Gastrocnemius medialis (tissue), 4 donors: ENCODE measurements at regions of chr5 and their contacts with region 1.

Region 1: DNA sequence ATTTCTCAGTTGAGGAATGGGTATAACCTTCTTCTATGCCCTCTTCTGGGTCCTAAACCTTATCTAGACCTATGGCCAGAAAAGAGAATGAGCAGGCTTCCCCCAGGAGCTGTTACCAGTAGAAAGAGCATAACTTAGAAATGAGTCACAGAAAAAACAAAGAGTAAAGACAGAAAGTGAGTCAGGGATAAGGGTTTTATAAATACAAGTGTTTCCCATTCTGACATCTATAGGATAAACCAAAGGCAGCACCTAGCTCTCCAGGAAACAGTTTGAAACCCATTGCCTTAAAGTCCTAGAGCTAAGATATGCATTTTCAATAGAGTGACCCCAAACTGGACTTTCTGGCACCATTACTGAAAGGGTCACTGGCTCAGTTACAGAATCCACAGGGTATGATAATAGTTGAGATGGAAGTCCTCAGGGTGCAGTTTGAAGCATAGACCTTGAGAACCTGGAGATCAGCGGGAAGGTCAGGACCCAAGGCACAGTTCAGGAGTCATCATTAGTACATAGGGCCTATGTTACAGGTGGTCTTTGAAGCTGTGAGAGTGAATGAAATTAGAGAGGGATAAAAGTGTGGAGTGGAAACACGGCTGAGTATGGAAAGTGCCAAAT is 42.7 kb upstream of the LIFR start:
- DNase-seq: no peak
- ATAC-seq: no peak
- H3K4me3 ChIP-seq: no peak overlapping the region
- H3K27ac ChIP-seq: peak overlapping the region in 3 of 4 donors; percentile 34 to 85 (median 82)
- H3K4me1 ChIP-seq: peaks cover 35 to 57% of the 10 kb centered on the region in 2 donors
- H3K27me3 ChIP-seq: no peaks in the 10 kb centered on the region
- CTCF ChIP-seq: no peak
- POLR2A ChIP-seq: no peak

Region 2: DNA sequence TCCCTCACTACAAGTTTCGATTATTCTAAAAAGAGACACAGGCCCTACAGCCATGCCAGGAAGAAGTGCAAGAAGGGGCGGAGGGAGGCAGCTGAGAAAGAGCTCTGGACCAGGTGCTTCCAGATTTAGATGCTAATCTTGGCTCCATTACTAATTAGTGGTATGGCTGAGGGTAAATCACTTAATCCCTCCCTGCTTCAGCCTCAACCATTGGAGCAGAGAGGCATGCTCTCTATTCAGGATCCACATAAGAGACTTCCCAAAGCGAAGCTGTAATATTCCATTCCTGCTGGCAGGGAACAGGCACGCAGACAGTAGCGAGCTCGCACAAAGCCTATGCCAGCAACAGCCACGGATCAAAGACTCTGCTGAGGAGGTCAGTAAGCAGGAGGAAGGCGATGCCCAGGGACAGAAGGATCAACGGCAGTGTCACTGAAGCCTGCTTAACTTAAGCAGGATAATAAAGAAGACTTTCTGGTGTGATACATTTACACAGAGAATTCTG is 66.9 kb before region 1 on chr5:
- in situ Hi-C with region 1: loop called in 1 of 4 experiments (anchors 10 kb)
- intact Hi-C with region 1: no loop called
- DNase-seq: no peak
- ATAC-seq: peak; percentile 28 to 56
- H3K4me3 ChIP-seq: peak overlapping the region in 1 of 4 donors; percentile 18
- H3K27ac ChIP-seq: peak overlapping the region; percentile 78 to 87 (median 85)
- H3K4me1 ChIP-seq: peaks cover 60 to 73% of the 10 kb centered on the region in 2 donors
- H3K27me3 ChIP-seq: no peaks in the 10 kb centered on the region
- CTCF ChIP-seq: no peak
- POLR2A ChIP-seq: no peak

Region 3: DNA sequence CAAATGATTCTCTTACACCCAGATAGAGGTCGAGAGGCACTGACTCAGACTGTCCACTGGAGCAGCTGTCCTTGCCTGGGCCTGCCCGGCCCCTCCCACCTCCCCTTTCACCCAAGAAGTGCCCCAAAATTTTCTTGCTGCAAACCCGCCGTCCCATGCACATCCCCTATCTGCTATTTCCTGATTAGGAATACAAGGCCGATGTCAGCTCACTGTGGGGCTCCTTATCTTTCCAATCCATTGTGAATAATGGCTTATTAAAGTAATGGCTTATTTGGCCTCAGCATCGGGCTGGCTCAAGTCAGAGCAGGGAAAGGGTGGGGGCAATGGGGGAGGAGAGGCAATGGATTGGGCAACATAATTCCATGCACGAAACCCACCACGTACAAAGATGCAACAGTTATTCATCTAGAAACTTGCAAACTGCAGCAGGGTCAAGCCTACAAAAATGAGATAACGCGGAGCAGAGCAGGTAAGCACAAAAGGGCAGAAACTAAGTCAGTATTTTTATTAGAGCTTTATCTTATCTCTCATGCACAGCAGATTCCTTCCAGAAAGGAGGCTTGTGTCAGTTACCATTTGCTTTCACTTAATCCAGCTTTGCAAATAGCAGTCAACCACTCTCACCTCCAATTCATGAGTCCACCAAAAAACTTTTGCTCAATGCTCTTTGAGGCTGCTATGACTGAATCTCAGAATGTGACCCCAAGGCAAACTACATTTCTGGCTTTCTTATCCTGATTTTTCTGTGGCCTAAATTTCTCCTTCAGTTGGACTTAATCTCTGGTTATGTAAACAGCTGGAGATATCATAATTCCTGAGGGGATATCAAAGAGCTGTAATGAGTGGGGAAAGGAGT is 108.5 kb after region 1 on chr5:
- in situ Hi-C with region 1: no loop called
- intact Hi-C with region 1: no loop called
- DNase-seq: no peak
- ATAC-seq: no peak
- H3K4me3 ChIP-seq: no peak overlapping the region
- H3K27ac ChIP-seq: no peak overlapping the region
- H3K4me1 ChIP-seq: peaks cover 0 to 3% of the 10 kb centered on the region in 2 donors
- H3K27me3 ChIP-seq: no peaks in the 10 kb centered on the region
- CTCF ChIP-seq: no peak
- POLR2A ChIP-seq: no peak